Gastrocnemius medialis (tissue), 4 donors: ENCODE measurements at regions of chr14 and their contacts with region 1.

Region 1: DNA sequence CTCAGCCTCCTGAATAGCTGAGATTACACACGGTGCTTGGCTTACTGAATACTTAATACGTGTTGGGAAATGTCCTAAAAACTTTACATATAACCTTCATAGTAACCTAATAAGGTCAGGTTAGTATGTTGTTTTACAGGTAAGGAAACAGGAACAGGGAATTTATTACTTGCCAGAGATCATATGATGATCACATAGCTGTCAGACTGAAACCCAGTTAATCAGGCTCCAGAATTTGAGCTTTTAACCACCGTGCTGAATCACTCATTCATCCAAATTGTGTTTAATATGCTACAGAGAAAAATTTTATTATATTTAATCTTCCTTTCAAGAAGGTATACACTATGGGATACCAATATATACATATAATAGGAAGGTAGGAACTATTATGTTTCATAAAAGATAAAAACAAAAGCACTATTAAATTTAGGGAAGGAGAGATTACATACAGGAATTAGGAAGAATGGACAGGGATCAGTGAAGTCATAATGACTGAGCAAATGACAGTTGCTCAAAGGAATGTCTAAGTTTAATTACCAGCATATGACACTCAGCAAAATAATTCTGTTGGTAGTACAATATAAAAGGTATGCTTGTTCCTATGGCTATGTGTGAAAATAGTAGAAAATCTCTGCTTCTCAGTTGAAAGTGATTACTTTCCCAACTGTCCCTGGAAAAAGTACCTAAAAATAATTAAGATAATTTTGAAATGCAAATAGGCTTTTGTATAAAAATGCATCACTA is 59.3 kb downstream of the HEATR5A start:
- DNase-seq: no peak
- ATAC-seq: no peak
- H3K4me3 ChIP-seq: no peak overlapping the region
- H3K27ac ChIP-seq: no peak overlapping the region
- H3K4me1 ChIP-seq: peaks cover 0 to 3% of the 10 kb centered on the region in 2 donors
- H3K27me3 ChIP-seq: no peaks in the 10 kb centered on the region
- CTCF ChIP-seq: no peak
- POLR2A ChIP-seq: no peak

Region 2: DNA sequence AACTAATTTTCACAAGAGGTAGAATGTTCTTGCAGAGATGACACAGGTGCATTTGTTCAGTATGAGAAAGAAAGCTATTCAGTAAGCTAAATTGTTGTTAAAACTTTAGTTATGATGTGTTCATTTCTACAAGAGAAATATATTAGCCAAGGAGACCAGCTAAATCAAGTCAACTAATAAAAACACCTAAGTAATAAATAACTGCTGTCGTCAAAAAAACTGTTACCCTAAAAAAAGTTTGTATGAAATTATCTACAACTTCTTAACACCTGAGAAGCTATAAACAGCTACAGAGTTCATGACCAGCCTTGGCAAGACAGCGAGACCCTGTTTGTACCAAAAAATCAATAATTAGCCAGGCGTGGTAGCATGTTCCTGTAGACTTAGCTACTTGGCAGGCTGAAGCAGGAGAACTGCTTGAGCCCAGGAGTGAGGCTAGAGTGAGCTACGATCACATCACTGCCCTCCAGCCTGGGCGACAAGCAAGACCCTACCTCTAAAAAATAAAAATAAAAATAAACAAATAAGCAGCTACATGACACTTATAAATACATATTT is 403.2 kb before region 1 on chr14:
- in situ Hi-C with region 1: loop called in 1 of 4 experiments (anchors 25 kb)
- intact Hi-C with region 1: no loop called
- DNase-seq: no peak
- ATAC-seq: peak in 1 of 2 donors; percentile 26
- H3K4me3 ChIP-seq: no peak overlapping the region
- H3K27ac ChIP-seq: no peak overlapping the region
- H3K4me1 ChIP-seq: peaks cover 0 to 19% of the 10 kb centered on the region in 2 donors
- H3K27me3 ChIP-seq: no peaks in the 10 kb centered on the region
- CTCF ChIP-seq: no peak
- POLR2A ChIP-seq: no peak

Region 3: DNA sequence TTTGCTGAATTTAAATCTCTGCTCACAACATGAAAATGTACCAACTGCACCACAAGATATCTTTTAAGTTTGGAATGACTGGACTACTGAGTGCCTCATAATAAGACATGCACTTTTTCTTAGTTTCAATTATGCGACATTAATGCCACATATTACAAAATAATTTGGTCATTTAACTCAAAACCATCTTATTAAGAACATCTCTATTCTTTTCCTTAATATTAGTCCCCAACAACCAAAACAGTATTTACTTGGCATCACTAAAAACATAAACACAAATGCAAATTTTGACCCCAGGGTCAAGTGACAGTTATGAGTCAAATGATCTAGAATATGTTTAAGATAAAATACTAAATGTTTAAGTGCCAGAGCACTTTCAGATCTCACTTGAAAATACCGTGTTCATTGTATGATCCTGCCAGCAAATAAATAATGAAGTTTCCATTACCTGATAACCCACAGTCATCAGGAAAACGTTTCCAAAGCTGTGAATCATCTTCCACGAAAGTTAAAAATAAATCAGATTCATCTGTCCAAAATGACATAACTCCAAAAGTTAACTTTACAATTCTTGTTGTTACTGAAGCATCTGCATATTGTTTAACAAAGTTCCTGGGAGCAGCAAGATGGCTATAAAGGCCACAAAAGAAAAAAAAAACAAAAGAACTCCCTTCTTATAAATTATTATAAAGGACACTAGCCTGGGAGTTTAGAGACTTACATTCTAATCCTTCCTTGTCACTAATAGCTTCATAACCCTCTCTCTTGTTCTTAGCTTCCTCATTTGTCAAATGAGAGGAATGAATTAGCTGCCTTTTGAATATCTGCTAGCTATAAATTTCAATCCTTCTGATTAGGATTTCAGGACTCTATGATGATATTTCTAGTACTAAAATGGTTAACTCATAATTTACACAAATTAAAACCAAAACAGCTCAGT is 366.1 kb before region 1 on chr14:
- in situ Hi-C with region 1: loop called in 2 of 4 experiments (anchors 25 kb)
- intact Hi-C with region 1: no loop called
- DNase-seq: no peak
- ATAC-seq: peak; percentile 77 to 81
- H3K4me3 ChIP-seq: peak overlapping the region in 3 of 4 donors; percentile 2 to 22 (median 8)
- H3K27ac ChIP-seq: peak overlapping the region; percentile 66 to 80 (median 79)
- H3K4me1 ChIP-seq: peaks cover 40 to 51% of the 10 kb centered on the region in 2 donors
- H3K27me3 ChIP-seq: no peaks in the 10 kb centered on the region
- CTCF ChIP-seq: no peak
- POLR2A ChIP-seq: no peak

Region 4: GRCh38 chr14:31137214-31137889 is 223.7 kb before region 1 on chr14:
- in situ Hi-C with region 1: loop called in 1 of 4 experiments (anchors 10 kb)
- intact Hi-C with region 1: no loop called
- DNase-seq: no peak
- ATAC-seq: no peak
- H3K4me3 ChIP-seq: no peak overlapping the region
- H3K27ac ChIP-seq: peak overlapping the region in 1 of 4 donors; percentile 8
- H3K4me1 ChIP-seq: peaks cover 0 to under 1% of the 10 kb centered on the region in 2 donors
- H3K27me3 ChIP-seq: no peaks in the 10 kb centered on the region
- CTCF ChIP-seq: no peak
- POLR2A ChIP-seq: no peak

Region 5: DNA sequence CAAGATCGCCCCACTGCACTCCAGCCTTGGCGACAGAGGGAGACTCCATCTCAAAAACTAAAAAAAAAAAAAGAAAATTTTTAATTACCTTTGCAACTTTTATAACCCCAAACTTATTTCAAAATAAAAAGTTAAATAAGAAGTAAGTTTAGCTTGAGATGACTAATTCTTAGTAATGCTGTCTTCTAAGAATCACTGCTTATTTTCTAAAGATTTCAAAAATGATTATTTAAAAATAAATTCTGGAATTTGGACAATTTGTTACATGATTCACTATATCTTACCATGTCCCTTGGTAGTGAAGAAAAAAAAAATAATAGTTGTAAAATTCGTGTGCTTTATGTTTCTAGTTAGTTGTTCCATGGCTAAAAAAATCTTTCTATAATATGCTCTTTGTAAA is 141.9 kb before region 1 on chr14:
- in situ Hi-C with region 1: loop called in 1 of 4 experiments (anchors 10 kb)
- intact Hi-C with region 1: no loop called
- DNase-seq: no peak
- ATAC-seq: no peak
- H3K4me3 ChIP-seq: no peak overlapping the region
- H3K27ac ChIP-seq: no peak overlapping the region
- H3K4me1 ChIP-seq: no peaks in the 10 kb centered on the region
- H3K27me3 ChIP-seq: no peaks in the 10 kb centered on the region
- CTCF ChIP-seq: no peak
- POLR2A ChIP-seq: no peak

Region 6: DNA sequence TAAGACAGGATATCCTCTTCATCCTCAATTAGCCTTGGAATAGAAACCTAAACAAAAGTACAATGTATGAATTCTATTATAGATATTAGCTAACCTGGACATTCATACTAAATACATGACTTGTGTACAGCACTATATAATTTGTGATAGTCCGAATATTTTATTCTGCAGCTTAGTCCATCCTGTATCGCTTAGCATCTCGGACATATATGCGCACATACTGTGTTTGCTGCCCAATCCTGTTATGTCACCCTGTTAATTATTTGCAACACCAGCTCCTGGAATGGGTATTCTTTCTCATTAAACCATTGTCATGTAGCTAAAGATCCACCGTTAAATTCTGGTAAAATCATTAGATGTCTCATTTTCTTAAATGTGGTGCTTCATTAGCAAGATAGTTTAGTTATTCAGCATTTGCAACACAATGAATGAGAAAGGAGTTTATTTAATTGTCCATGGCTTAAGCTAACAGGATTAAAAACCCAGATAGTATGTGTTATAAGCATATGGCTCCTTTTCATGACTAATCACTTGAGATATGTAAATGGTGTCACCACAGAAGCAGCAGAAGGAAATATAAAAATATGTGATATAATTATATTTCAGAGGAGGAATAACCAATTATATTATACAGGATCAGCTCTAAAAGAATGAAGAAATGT is 560.0 kb after region 1 on chr14:
- in situ Hi-C with region 1: no loop called
- intact Hi-C with region 1: no loop called
- DNase-seq: no peak
- ATAC-seq: no peak
- H3K4me3 ChIP-seq: no peak overlapping the region
- H3K27ac ChIP-seq: no peak overlapping the region
- H3K4me1 ChIP-seq: peaks cover 8 to 11% of the 10 kb centered on the region in 2 donors
- H3K27me3 ChIP-seq: no peaks in the 10 kb centered on the region
- CTCF ChIP-seq: no peak
- POLR2A ChIP-seq: no peak